ENCODE measurements at regions of chr1 and their contacts with region 1.

Region 1: GRCh38 chr1:25990702-25991395 is 7.0 kb downstream of the PAFAH2 start:
- DNase-seq: peak in 9 of 10 donors; percentile 11 to 73 (median 56)
- ATAC-seq: peak; percentile 91 to 95
- H3K4me3 Mint-ChIP-seq: peak overlapping the region; percentile 81 to 94 (median 90)
- H3K27ac Mint-ChIP-seq: peak overlapping the region; percentile 89 to 97 (median 94)
- H3K4me1 Mint-ChIP-seq: peaks cover 34 to 73% (median 72%) of the 10 kb centered on the region in 4 donors
- H3K27me3 Mint-ChIP-seq: no peaks in the 10 kb centered on the region

Region 2: DNA sequence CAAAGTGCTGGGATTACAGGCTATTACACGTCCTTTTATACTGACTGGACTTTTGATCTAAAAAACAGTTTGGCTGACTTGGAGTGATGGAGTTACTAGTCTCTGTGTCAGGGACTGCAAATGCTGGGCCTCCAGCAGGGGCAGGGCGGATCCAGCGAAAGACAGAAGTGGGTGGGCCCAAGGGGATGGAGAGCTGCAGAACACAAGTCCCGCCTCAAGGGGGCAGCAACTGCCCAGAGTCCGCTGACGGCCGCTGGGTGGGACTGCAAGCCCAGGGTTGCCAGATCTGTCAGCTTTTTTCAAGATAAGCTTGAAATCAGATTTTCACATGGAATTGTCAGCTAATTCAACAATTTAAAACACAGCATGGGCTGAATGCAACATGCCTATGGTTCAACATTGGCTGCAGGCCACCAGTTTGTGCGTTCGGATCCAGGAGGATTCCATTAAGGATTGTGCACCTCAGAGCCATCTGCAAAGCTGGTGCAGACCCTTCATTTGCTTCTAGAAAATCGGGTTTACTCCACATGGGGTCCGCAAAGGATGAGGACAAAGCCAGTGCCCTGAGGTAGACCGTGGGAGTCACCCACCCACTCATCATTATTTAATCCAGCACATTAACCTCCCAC is 95.4 kb before region 1 on chr1:
- POLR2A ChIA-PET with region 1: interaction called, 97 read pairs
- DNase-seq: peak; percentile 87 to 95 (median 92)
- ATAC-seq: peak; percentile 99 to 100
- H3K4me3 Mint-ChIP-seq: no peak overlapping the region
- H3K27ac Mint-ChIP-seq: peak overlapping the region in 9 of 10 donors; percentile 4 to 85 (median 63)
- H3K4me1 Mint-ChIP-seq: peaks cover 4 to 11% (median 9%) of the 10 kb centered on the region in 4 donors
- H3K27me3 Mint-ChIP-seq: no peaks in the 10 kb centered on the region

Region 3: DNA sequence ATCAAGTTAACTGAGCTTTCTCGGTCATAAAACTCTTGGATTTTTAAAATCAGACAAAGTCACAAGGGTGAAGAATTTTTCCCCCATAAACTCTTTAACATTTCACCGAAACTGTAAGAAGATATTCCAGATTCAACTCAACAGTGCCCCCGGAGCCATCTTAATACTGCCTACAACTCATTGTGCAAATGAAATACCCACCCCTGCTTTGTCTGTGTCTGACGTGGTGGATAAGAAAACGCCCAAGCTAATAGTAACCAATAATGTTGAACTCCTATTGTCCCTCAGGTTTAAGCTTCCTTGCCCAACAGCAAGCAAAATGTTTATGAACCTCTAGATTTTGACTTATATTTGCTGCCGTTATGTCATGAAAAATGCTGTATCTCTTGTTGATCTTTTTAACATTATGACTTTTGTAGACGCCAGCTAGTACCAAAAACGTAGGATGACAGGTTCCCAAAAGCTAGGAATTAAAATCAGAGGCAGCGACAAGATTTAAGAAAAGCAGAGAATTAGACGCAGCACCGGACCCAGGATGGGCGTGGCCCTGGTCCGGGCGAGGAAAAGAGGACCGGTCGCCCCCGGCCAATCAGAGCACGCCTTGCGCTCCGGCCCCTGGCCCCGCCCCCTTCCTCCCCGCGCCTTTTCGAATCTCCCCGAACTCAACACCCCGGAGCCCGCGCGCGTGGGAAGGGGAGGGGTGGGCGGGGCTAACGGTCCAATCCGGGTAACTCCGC is 85.7 kb before region 1 on chr1:
- POLR2A ChIA-PET with region 1: interaction called, 29 read pairs
- DNase-seq: peak; percentile 76 to 96 (median 88)
- ATAC-seq: peak; percentile 66 to 71
- H3K4me3 Mint-ChIP-seq: peak overlapping the region; percentile 84 to 98 (median 92)
- H3K27ac Mint-ChIP-seq: peak overlapping the region; percentile 84 to 97 (median 94)
- H3K4me1 Mint-ChIP-seq: peaks cover 8 to 26% (median 19%) of the 10 kb centered on the region in 4 donors
- H3K27me3 Mint-ChIP-seq: no peaks in the 10 kb centered on the region

Region 4: DNA sequence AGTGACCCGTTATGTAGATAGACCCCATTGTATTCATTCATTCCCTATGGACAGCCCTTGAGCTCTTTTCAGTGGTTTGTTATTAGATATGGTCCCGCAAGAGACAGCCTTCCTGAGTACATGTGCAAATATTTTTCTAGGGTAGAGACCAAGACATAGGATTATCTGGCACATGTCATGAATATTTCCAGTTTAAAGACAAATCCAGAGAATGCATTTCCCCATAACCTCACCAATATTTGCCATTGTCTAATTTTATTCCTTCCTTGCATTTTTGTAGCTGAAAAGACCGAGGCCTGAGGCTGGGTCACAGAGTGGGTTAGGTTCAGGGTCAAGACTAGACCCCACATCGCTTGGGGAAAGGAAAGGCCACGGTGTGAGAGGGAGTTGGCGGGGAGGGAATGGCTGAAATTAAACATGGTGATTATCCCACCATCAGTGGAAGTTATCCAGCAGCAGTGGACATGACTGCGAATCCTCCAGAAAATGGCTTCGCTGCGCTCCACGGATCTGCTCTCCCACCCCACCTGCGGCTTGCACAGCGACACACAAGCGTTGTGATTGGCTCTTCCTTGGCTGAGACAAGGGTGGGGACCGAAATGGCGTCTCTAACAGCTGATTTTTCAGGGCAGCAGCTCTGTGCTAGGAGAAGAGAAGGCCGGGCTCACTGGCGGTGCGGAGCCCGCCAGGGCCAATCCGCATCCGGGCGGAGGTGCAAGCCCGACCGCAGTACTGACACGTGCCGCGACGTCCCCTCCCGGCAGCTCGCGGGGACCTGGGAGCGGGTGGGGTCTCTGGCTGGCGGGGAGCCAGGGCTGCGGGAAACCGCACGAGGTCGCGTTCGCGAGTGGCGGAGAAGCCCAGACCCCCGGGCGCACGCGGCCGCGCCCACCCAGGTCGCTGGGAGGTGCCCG is 68.5 kb before region 1 on chr1:
- POLR2A ChIA-PET with region 1: interaction called, 28 read pairs
- DNase-seq: peak; percentile 26 to 79 (median 55)
- ATAC-seq: peak; percentile 84 to 88
- H3K4me3 Mint-ChIP-seq: peak overlapping the region; percentile 80 to 92 (median 90)
- H3K27ac Mint-ChIP-seq: peak overlapping the region; percentile 60 to 91 (median 85)
- H3K4me1 Mint-ChIP-seq: peaks cover 12 to 40% (median 32%) of the 10 kb centered on the region in 4 donors
- H3K27me3 Mint-ChIP-seq: peaks cover 0 to 2% (median 0%) of the 10 kb centered on the region in 5 donors

Region 5: GRCh38 chr1:25971066-25971810 is 19.6 kb before region 1 on chr1:
- POLR2A ChIA-PET with region 1: interaction called, 49 read pairs
- DNase-seq: peak in 4 of 10 donors; percentile 5 to 67 (median 52)
- ATAC-seq: peak; percentile 89 to 90
- H3K4me3 Mint-ChIP-seq: peak overlapping the region; percentile 7 to 79 (median 60)
- H3K27ac Mint-ChIP-seq: peak overlapping the region; percentile 57 to 97 (median 85)
- H3K4me1 Mint-ChIP-seq: peaks cover 31 to 61% (median 33%) of the 10 kb centered on the region in 4 donors
- H3K27me3 Mint-ChIP-seq: no peaks in the 10 kb centered on the region